PC-9 (cell line): ENCODE measurements at regions of chr18 and their contacts with region 1.

Region 1: GRCh38 chr18:52160652-52161051 is 179.3 kb upstream of the DCC start:
- DNase-seq: peak; percentile 52 to 96
- H3K4me3 ChIP-seq: no peak overlapping the region
- H3K27ac ChIP-seq: peak overlapping the region; percentile 83
- H3K4me1 ChIP-seq: peaks cover 35% of the 10 kb centered on the region
- H3K27me3 ChIP-seq: no peaks in the 10 kb centered on the region
- CTCF ChIP-seq: no peak

Region 2: GRCh38 chr18:52150050-52150449 is 10.6 kb before region 1 on chr18:
- CTCF ChIA-PET with region 1: no interaction called
- POLR2A ChIA-PET with region 1: no interaction called
- intact Hi-C with region 1: loop called (anchors 1 kb)
- DNase-seq: peak; percentile 50 to 88
- H3K4me3 ChIP-seq: no peak overlapping the region
- H3K27ac ChIP-seq: peak overlapping the region; percentile 56
- H3K4me1 ChIP-seq: peaks cover 14% of the 10 kb centered on the region
- H3K27me3 ChIP-seq: no peaks in the 10 kb centered on the region
- CTCF ChIP-seq: no peak